Heart right ventricle (tissue), 16 donors: ENCODE measurements at regions of chr9 and their contacts with region 1.

Region 1: DNA sequence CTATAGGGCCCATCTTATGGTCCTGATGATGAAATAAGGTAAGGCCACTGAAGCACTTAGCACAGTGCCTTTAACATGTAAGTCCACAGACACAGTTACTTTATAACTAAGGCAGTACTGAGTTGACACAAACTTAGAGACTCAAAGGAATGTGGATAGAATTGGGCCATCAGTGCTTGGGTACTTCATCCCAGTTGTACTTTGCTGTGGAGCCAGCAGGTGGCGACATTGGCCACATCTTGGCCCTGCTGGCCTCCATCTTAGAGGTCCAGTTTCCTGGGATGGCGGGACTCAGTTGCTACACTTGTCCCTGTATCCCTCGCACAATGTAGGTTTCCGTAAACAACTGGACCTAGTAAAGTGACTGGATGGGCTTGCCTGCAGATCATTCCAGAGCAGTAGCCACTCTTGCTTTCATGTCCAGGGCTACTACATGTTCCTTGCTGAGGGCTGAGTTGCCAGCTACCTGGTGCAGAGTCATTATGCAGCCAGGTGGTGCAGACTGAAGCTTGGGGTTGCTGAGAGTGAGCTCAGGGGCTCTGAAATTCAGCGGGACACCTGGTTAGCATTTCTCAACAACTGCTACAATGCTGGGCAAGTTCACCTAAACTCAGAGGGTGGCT is 10.6 kb downstream of the MTAP start:
- DNase-seq: peak; percentile 45 to 70
- ATAC-seq: peak; percentile 64 to 88 (median 72)
- H3K4me3 ChIP-seq: no peak overlapping the region
- H3K27ac ChIP-seq: peak overlapping the region in 3 of 10 donors; percentile 36 to 65 (median 42)
- H3K4me1 ChIP-seq: peaks cover 0 to 53% (median 31%) of the 10 kb centered on the region in 9 donors
- H3K27me3 ChIP-seq: no peaks in the 10 kb centered on the region
- CTCF ChIP-seq: peak; percentile 61 to 91 (median 79)

Region 2: DNA sequence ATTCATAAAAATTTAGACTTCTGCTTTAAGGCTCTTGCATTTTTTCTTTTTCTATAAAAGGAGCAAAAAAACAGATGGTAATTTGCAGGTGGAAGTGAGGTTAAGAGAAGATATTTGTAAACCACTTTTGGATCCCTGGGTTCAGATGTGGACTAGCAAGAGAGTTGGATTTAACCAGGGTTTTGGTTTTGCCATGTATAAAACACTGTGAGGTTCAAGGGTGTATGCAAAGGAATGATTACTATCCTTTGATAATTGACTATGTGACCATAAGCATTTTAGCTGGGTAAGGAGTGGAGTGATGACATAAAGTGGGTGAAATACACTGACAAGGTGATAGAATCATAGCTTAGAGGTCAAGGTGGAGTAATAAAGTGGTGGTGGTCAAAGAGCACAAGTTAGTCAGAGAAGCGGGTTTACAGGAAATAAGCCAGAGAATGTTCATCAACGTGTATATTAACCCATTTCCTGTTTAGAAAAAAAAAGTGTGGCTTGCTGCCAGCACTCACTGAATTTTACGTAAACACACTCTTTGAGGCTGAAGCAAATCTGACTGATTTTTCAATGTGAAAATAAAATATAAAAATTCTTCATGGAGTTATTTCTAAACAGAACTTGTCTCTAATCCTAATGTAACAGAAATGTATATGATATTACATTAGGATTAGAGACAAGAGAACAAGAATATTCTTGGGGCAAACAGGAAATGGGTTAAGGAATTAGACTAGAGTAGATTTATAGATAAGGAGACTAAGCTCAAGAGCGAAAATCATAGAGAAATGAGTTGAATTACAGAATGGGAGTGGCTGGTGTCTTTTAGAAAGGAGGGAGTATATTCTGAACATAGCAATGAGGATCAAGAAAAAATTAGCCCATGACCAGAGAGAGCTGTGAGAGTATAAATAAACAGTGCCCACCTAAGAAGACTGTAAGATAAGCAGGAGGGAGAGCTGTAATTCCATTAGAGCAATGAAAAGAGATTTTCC is 106.6 kb after region 1 on chr9:
- intact Hi-C with region 1: no loop called
- DNase-seq: no peak
- ATAC-seq: no peak
- H3K4me3 ChIP-seq: no peak overlapping the region
- H3K27ac ChIP-seq: peak overlapping the region in 1 of 10 donors; percentile 51
- H3K4me1 ChIP-seq: peaks cover 0 to 19% (median 0%) of the 10 kb centered on the region in 9 donors
- H3K27me3 ChIP-seq: no peaks in the 10 kb centered on the region
- CTCF ChIP-seq: no peak

Region 3: GRCh38 chr9:22008736-22009562 is 195.9 kb after region 1 on chr9 and contains the start of gene CDKN2B:
- intact Hi-C with region 1: loop called in 6 of 10 experiments (anchors 2 to 10 kb)
- DNase-seq: peak; percentile 95 to 97
- ATAC-seq: peak; percentile 98 to 100 (median 99)
- H3K4me3 ChIP-seq: peak within 1 kb of the TSS; percentile 45 to 81 (median 72)
- H3K27ac ChIP-seq: peak within 1 kb of the TSS in 9 of 10 donors; percentile 69 to 90 (median 82)
- H3K4me1 ChIP-seq: peaks cover 0 to 22% (median 9%) of the 10 kb centered on the region in 9 donors
- H3K27me3 ChIP-seq: peaks cover 0 to 70% (median 34%) of the 10 kb centered on the region in 7 donors
- CTCF ChIP-seq: peak; percentile 80 to 98 (median 91)
- total RNA-seq, gene CDKN2B: 1.3 to 5.2 (median 2.2) TPM

Region 4: GRCh38 chr9:22037954-22038690 is 225.1 kb after region 1 on chr9:
- intact Hi-C with region 1: loop called in 9 of 10 experiments (anchors 1 to 10 kb)
- DNase-seq: no peak
- ATAC-seq: no peak
- H3K4me3 ChIP-seq: no peak overlapping the region
- H3K27ac ChIP-seq: no peak overlapping the region
- H3K4me1 ChIP-seq: peaks cover 0 to 20% (median 0%) of the 10 kb centered on the region in 9 donors
- H3K27me3 ChIP-seq: no peaks in the 10 kb centered on the region
- CTCF ChIP-seq: peak; percentile 13 to 68 (median 55)

Region 5: GRCh38 chr9:22119537-22120158 is 306.6 kb after region 1 on chr9:
- intact Hi-C with region 1: loop called in 7 of 10 experiments (anchors 2 to 10 kb)
- DNase-seq: no peak
- ATAC-seq: peak in 6 of 8 donors; percentile 27 to 77 (median 50)
- H3K4me3 ChIP-seq: no peak overlapping the region
- H3K27ac ChIP-seq: no peak overlapping the region
- H3K4me1 ChIP-seq: peaks cover 0 to 10% (median 0%) of the 10 kb centered on the region in 9 donors
- H3K27me3 ChIP-seq: peaks cover 0 to 3% (median 0%) of the 10 kb centered on the region in 7 donors
- CTCF ChIP-seq: peak in 7 of 9 donors; percentile 32 to 55 (median 45)

Region 6: DNA sequence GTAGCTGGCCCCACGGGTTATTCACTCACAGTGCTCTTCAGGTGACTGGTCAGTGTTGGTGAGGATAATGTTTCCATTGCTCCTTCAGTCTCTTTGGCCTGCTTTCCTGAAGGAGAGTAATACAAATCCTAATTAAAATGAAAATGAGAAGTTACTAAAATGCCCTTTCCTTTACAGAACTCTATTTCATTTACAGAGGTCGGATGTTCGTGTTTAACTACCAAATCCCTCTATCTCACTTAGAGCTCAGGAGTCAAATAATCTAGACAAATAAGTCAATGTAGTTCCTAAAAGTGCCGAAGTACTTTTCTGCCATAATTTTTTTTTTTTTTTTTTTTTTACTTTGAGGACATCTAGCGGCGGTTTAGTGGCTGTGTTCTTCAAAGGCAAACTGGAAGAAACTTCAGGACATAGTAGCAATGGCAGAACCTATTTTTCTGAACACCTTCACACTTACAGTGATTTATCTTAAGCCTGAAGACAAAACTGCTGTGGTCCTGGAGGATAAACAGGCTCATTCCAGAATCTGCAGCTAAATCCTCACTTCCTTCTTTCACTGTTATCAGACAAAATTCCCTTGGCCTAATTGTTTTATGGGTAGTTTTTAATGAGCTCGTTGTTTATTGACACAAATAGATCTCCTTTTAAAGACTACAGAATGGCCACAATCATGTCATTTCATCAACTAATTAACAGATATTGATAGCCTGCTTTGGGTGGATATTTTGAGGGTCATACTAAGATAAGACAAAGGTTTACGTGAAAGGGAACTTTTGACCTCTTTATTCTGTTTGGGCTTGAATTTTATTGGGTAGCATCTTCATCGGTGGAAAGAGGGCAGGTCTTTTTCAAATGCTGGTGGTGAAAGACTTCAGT is 426.0 kb after region 1 on chr9:
- intact Hi-C with region 1: loop called (anchors 1 to 10 kb)
- DNase-seq: no peak
- ATAC-seq: peak in 1 of 8 donors; percentile 46
- H3K4me3 ChIP-seq: no peak overlapping the region
- H3K27ac ChIP-seq: no peak overlapping the region
- H3K4me1 ChIP-seq: peaks cover 0 to 27% (median 0%) of the 10 kb centered on the region in 9 donors
- H3K27me3 ChIP-seq: no peaks in the 10 kb centered on the region
- CTCF ChIP-seq: peak in 8 of 9 donors; percentile 16 to 66 (median 56)

Region 7: GRCh38 chr9:22446950-22447617 is 634.0 kb after region 1 on chr9:
- intact Hi-C with region 1: loop called in 5 of 10 experiments (anchors 2 to 10 kb)
- DNase-seq: peak; percentile 10 to 67
- ATAC-seq: peak; percentile 83 to 94 (median 84)
- H3K4me3 ChIP-seq: peak overlapping the region; percentile 23 to 69 (median 64)
- H3K27ac ChIP-seq: peak overlapping the region in 9 of 10 donors; percentile 48 to 86 (median 80)
- H3K4me1 ChIP-seq: peaks cover 0 to 17% (median 8%) of the 10 kb centered on the region in 9 donors
- H3K27me3 ChIP-seq: peaks cover 0 to 73% (median 27%) of the 10 kb centered on the region in 7 donors
- CTCF ChIP-seq: peak in 2 of 9 donors; percentile 23 to 35

Region 8: DNA sequence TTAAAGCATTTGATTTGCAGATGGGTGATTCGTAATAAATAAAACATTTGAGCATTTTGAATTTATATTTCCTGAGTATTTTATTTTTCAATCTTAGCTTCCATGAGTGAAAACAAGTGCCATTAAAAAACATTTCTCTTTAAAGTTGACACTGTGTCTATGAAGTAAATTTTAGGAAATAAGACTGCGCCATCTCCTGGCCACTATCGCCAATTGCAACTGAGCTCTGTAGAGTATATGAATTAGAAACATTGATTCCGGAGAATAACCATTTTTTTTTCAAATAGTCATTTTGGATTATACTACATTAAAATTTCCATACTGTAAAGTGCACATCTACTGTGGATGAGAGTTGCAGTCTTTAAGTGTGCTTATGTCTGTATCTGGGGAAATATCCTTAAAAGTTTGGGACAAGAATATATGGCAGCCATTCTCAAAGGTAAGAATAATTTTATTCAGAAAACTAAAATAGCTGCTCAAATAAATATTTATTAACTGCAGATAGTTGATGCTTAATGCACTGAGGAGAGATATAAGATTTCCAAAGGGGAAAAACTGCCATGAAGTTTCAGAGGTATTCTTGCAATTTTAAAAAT is 639.5 kb after region 1 on chr9:
- intact Hi-C with region 1: loop called in 5 of 10 experiments (anchors 2 to 10 kb)
- DNase-seq: peak in 1 of 2 donors; percentile 21
- ATAC-seq: peak in 1 of 8 donors; percentile 37
- H3K4me3 ChIP-seq: no peak overlapping the region
- H3K27ac ChIP-seq: no peak overlapping the region
- H3K4me1 ChIP-seq: peaks cover 0 to 5% (median 1%) of the 10 kb centered on the region in 9 donors
- H3K27me3 ChIP-seq: peaks cover 0 to 34% (median 5%) of the 10 kb centered on the region in 7 donors
- CTCF ChIP-seq: peak; percentile 49 to 86 (median 78)